HepG2 (cell line): ENCODE measurements at regions of chr18 and their contacts with region 1.

Region 1: GRCh38 chr18:51890762-51891161 is 449.2 kb upstream of the DCC start:
- DNase-seq: no peak
- ATAC-seq: no peak
- H3K4me3 ChIP-seq: no peak overlapping the region
- H3K27ac ChIP-seq: no peak overlapping the region
- H3K4me1 ChIP-seq: no peaks in the 10 kb centered on the region
- H3K27me3 ChIP-seq: no peaks in the 10 kb centered on the region
- CTCF ChIP-seq: no peak
- EP300 ChIP-seq: no peak
- POLR2A ChIP-seq: no peak
- RAD21 ChIP-seq: no peak

Region 2: DNA sequence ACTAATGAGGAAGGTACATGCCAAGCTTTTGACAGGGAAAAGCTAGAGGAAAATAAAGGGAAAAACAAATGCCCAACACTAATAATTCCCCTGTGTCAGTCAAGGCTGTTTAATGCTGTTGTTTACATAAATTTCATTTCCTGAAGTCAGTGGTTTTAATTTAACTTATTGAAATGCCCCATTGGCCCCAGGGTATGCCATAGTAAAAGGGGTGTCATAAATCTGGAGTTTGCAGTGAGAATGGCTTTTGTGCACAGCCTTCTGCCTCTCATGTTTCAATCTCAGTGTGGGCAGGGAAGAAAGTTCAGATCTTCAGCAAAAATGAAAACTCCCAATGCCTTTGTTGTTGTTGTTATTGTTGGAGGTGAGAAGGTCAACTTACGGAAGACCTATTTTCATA is 100.9 kb before region 1 on chr18:
- CTCF ChIA-PET with region 1: no interaction called
- POLR2A ChIA-PET with region 1: no interaction called
- in situ Hi-C with region 1: loop called (anchors 25 kb)
- intact Hi-C with region 1: no loop called
- DNase-seq: no peak
- ATAC-seq: no peak
- H3K4me3 ChIP-seq: no peak overlapping the region
- H3K27ac ChIP-seq: no peak overlapping the region
- H3K4me1 ChIP-seq: no peaks in the 10 kb centered on the region
- H3K27me3 ChIP-seq: no peaks in the 10 kb centered on the region
- CTCF ChIP-seq: no peak
- EP300 ChIP-seq: no peak
- POLR2A ChIP-seq: no peak
- RAD21 ChIP-seq: no peak